Heart right ventricle (tissue), 16 donors: ENCODE measurements at regions of chr14 and their contacts with region 1.

Region 1: GRCh38 chr14:44912041-44912869 is 49.5 kb downstream of the KLHL28 start:
- DNase-seq: peak; percentile 20
- ATAC-seq: peak; percentile 34 to 75 (median 52)
- H3K4me3 ChIP-seq: peak overlapping the region; percentile 33 to 66 (median 57)
- H3K27ac ChIP-seq: peak overlapping the region in 1 of 10 donors; percentile 40
- H3K4me1 ChIP-seq: peaks cover 0 to 22% (median 7%) of the 10 kb centered on the region in 9 donors
- H3K27me3 ChIP-seq: peaks cover 0 to 38% (median 0%) of the 10 kb centered on the region in 7 donors
- CTCF ChIP-seq: no peak

Region 2: DNA sequence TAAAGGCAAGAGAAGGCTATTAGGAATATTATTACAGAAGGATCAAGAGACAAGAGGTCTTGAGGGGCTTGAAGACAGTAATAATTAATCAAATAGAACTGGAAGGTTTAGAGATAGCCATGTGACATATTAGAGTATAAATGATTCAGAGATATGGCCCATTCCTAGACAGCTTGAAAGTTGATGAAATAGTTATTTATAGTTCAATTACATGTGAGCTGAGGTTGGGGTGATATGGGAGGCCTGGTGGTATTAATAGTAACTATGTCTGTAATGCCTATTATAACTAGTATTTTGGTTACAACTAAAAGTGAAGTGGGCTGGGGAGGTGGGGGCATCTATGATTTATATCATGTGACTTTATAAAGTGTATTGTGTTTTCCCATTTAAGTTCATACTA is 354.8 kb after region 1 on chr14:
- intact Hi-C with region 1: loop called in 9 of 10 experiments (anchors 2 to 10 kb)
- DNase-seq: peak in 1 of 2 donors; percentile 18
- ATAC-seq: peak; percentile 70 to 97 (median 91)
- H3K4me3 ChIP-seq: no peak overlapping the region
- H3K27ac ChIP-seq: peak overlapping the region in 6 of 10 donors; percentile 49 to 79 (median 76)
- H3K4me1 ChIP-seq: peaks cover 0 to 15% (median 5%) of the 10 kb centered on the region in 9 donors
- H3K27me3 ChIP-seq: no peaks in the 10 kb centered on the region
- CTCF ChIP-seq: no peak

Region 3: GRCh38 chr14:45838597-45838996 is 926.3 kb after region 1 on chr14:
- intact Hi-C with region 1: no loop called
- DNase-seq: no peak
- ATAC-seq: no peak
- H3K4me3 ChIP-seq: no peak overlapping the region
- H3K27ac ChIP-seq: no peak overlapping the region
- H3K4me1 ChIP-seq: no peaks in the 10 kb centered on the region
- H3K27me3 ChIP-seq: no peaks in the 10 kb centered on the region
- CTCF ChIP-seq: no peak